Activated CD4-positive, alpha-beta T cell treated with anti-CD3 and anti-CD28 coated beads for 36 hours (primary cell): ENCODE measurements at regions of chr3 and their contacts with region 1.

Region 1: GRCh38 chr3:133644768-133645167 is 17.0 kb downstream of the TOPBP1 start:
- DNase-seq: no peak
- ATAC-seq: no peak
- H3K4me3 Mint-ChIP-seq: no peak overlapping the region
- H3K27ac Mint-ChIP-seq: no peak overlapping the region
- H3K4me1 Mint-ChIP-seq: peaks cover 2% of the 10 kb centered on the region
- H3K27me3 Mint-ChIP-seq: no peaks in the 10 kb centered on the region

Region 2: GRCh38 chr3:132695422-132695821 is 949.3 kb before region 1 on chr3:
- CTCF ChIA-PET with region 1: no interaction called
- POLR2A ChIA-PET with region 1: interaction called, 14 read pairs
- intact Hi-C with region 1: no loop called
- DNase-seq: no peak
- ATAC-seq: peak; percentile 33
- H3K4me3 Mint-ChIP-seq: no peak overlapping the region
- H3K27ac Mint-ChIP-seq: no peak overlapping the region
- H3K4me1 Mint-ChIP-seq: peaks cover 5% of the 10 kb centered on the region
- H3K27me3 Mint-ChIP-seq: no peaks in the 10 kb centered on the region

Region 3: DNA sequence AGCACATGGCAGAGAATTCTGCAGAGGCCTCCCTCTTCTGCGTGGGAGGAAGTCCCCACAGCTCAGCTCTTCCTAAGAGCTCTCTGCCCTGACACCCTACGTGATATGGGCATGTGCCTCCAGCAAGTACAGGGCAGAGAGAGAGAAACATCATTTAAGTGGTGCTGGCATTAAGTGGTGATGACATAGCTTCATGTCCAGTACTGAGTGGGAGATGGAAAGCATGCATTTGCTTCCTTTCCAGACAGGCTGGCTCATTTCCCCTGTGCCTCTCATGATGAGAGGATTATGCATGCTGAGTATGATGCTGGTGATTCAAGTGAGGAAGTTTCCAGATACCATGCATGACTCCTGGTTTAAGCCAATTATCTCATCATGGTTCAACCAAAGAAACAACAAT is 218.0 kb before region 1 on chr3:
- CTCF ChIA-PET with region 1: no interaction called
- POLR2A ChIA-PET with region 1: no interaction called
- intact Hi-C with region 1: no loop called
- DNase-seq: no peak
- ATAC-seq: peak; percentile 68
- H3K4me3 Mint-ChIP-seq: no peak overlapping the region
- H3K27ac Mint-ChIP-seq: no peak overlapping the region
- H3K4me1 Mint-ChIP-seq: peaks cover 6% of the 10 kb centered on the region
- H3K27me3 Mint-ChIP-seq: no peaks in the 10 kb centered on the region

Region 4: DNA sequence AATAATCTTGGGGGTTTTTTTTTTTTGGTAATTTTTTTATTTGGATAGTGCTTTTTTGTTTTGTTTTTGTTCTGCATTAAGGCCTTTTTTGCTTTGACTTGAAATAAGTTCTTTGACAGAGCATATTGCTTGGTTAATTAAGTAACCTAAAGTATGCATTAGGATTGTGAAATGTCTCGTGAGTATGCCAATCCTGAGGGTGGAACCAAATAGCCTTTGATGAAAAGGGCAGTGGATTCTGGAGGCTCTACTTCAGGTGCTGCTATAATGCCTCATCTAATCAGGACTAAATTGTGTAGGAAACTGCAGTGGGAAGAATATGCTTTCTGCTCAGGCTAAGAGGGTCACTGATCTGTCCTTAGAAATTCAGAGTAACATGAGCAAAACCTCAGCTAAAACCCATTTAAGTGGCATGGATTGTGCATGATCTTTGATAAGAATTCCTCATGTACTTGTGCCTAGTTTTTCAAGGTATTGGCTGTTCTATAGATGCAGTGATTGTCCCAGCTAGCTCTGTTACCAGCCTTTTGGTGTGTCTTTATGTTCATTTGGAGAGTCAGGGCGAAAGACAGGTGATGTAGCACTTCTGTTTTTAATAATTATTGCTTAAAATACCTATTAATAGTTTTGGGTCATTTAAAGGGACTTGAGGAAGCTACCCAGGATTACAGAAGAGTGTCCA is 55.8 kb before region 1 on chr3:
- CTCF ChIA-PET with region 1: no interaction called
- POLR2A ChIA-PET with region 1: no interaction called
- intact Hi-C with region 1: loop called in 1 of 2 experiments (anchors 10 kb)
- DNase-seq: no peak
- ATAC-seq: no peak
- H3K4me3 Mint-ChIP-seq: no peak overlapping the region
- H3K27ac Mint-ChIP-seq: no peak overlapping the region
- H3K4me1 Mint-ChIP-seq: peaks cover 30% of the 10 kb centered on the region
- H3K27me3 Mint-ChIP-seq: no peaks in the 10 kb centered on the region

Region 5: DNA sequence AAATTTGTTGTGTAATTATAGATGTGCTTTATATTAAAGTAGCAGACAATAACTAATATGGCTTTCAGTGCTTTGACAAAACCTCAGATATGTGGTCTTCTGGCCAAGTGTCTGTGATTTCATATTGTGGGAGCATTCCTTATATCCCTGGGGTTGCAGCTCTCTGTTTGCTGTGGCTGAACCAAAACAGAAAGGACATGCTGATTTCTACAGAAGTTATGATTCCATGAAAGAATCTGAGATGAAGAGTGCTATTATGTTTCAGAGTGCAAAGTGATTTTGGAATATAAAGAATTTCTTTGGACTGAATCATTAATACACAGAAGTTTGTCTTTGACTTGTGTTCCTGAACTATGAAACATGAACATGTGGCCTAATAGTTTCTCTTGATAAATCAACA is 34.7 kb before region 1 on chr3:
- CTCF ChIA-PET with region 1: no interaction called
- POLR2A ChIA-PET with region 1: no interaction called
- intact Hi-C with region 1: loop called (anchors 5 kb)
- DNase-seq: no peak
- ATAC-seq: no peak
- H3K4me3 Mint-ChIP-seq: no peak overlapping the region
- H3K27ac Mint-ChIP-seq: no peak overlapping the region
- H3K4me1 Mint-ChIP-seq: no peaks in the 10 kb centered on the region
- H3K27me3 Mint-ChIP-seq: no peaks in the 10 kb centered on the region

Region 6: GRCh38 chr3:133627789-133628188 is 17.0 kb before region 1 on chr3:
- CTCF ChIA-PET with region 1: interaction called, 4 read pairs
- POLR2A ChIA-PET with region 1: no interaction called
- intact Hi-C with region 1: loop called in 1 of 2 experiments (anchors 2 kb)
- DNase-seq: no peak
- ATAC-seq: no peak
- H3K4me3 Mint-ChIP-seq: no peak overlapping the region
- H3K27ac Mint-ChIP-seq: no peak overlapping the region
- H3K4me1 Mint-ChIP-seq: peaks cover 3% of the 10 kb centered on the region
- H3K27me3 Mint-ChIP-seq: no peaks in the 10 kb centered on the region

Region 7: DNA sequence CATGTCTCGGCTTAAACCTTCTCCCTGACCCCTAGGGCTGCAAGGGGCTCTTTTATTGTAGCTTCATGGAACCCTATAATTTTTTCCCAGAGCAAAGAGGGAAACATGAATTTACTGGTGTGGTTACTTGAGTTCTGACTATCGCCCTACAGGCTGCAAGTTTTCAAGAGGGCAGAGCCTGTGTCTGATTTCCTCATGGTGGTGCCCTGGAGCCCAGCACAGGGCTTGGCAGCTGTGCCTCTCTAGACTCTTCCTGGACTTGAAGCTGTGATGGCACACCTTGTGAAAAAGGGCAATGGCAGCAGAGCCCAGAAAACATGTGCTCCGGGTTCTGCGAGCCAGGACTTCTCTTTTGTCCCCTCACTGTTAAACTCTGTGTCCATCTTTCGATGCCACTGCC is 67.2 kb after region 1 on chr3:
- CTCF ChIA-PET with region 1: no interaction called
- POLR2A ChIA-PET with region 1: no interaction called
- intact Hi-C with region 1: no loop called
- DNase-seq: no peak
- ATAC-seq: no peak
- H3K4me3 Mint-ChIP-seq: no peak overlapping the region
- H3K27ac Mint-ChIP-seq: no peak overlapping the region
- H3K4me1 Mint-ChIP-seq: no peaks in the 10 kb centered on the region
- H3K27me3 Mint-ChIP-seq: peaks cover 15% of the 10 kb centered on the region